Activated CD4-positive, alpha-beta T cell treated with anti-CD3 and anti-CD28 coated beads for 36 hours (primary cell): ENCODE measurements at regions of chr2 and their contacts with region 1.

Region 1: GRCh38 chr2:233976690-233977294 is 59.6 kb downstream of the TRPM8 start:
- DNase-seq: no peak
- ATAC-seq: no peak
- H3K4me3 Mint-ChIP-seq: no peak overlapping the region
- H3K27ac Mint-ChIP-seq: no peak overlapping the region
- H3K4me1 Mint-ChIP-seq: peaks cover 22% of the 10 kb centered on the region
- H3K27me3 Mint-ChIP-seq: no peaks in the 10 kb centered on the region

Region 2: GRCh38 chr2:232588680-232589585 is 1387.9 kb before region 1 on chr2:
- CTCF ChIA-PET with region 1: no interaction called
- POLR2A ChIA-PET with region 1: no interaction called
- intact Hi-C with region 1: no loop called
- DNase-seq: no peak
- ATAC-seq: no peak
- H3K4me3 Mint-ChIP-seq: no peak overlapping the region
- H3K27ac Mint-ChIP-seq: no peak overlapping the region
- H3K4me1 Mint-ChIP-seq: peaks cover 8% of the 10 kb centered on the region
- H3K27me3 Mint-ChIP-seq: no peaks in the 10 kb centered on the region

Region 3: DNA sequence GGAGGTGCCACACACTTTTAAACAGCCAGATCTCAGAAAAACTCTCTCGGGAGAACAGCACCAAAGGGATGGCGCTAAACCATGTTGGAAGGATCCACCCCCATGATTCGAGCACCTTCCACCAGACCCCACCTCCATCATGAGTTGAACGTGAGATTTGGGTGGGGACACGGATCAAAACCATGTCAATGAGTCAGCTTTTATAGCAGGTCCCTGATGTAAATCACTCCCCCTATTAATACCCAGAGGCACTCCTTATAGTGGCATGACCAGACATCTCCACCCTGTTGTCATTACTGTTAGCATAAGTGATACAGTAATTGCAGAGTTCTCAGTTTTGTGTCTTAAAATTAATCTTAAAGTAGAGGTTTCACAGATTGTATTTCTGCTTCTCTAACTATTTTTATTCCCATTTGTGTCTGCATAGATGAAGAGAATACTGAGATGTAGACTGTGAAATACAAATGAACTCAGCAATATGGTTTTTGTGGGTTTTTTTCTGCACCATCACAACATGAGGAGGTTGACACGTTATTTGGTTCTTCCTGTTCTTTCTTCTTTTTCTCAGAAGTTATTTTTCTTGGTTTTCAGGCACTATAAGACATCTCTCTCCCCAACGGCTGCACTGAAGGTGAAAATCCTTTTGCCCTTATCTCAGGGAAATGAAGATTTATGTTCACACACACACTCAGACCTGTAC is 301.9 kb after region 1 on chr2:
- CTCF ChIA-PET with region 1: no interaction called
- POLR2A ChIA-PET with region 1: no interaction called
- intact Hi-C with region 1: loop called in 1 of 2 experiments (anchors 5 kb)
- DNase-seq: no peak
- ATAC-seq: peak; percentile 74
- H3K4me3 Mint-ChIP-seq: peak overlapping the region; percentile 29
- H3K27ac Mint-ChIP-seq: peak overlapping the region; percentile 80
- H3K4me1 Mint-ChIP-seq: peaks cover 49% of the 10 kb centered on the region
- H3K27me3 Mint-ChIP-seq: no peaks in the 10 kb centered on the region